ENCODE measurements at regions of chr12 and their contacts with region 1.

Region 1: GRCh38 chr12:10562306-10562933 is 51.0 kb downstream of the MAGOHB start:
- DNase-seq: no peak
- H3K4me3 ChIP-seq: no peak overlapping the region
- H3K27ac ChIP-seq: no peak overlapping the region
- H3K27me3 ChIP-seq: peaks cover 0 to 3% (median 0%) of the 10 kb centered on the region in 45 donors
- CTCF ChIP-seq: peak; percentile 69 to 98 (median 87)

Region 2: DNA sequence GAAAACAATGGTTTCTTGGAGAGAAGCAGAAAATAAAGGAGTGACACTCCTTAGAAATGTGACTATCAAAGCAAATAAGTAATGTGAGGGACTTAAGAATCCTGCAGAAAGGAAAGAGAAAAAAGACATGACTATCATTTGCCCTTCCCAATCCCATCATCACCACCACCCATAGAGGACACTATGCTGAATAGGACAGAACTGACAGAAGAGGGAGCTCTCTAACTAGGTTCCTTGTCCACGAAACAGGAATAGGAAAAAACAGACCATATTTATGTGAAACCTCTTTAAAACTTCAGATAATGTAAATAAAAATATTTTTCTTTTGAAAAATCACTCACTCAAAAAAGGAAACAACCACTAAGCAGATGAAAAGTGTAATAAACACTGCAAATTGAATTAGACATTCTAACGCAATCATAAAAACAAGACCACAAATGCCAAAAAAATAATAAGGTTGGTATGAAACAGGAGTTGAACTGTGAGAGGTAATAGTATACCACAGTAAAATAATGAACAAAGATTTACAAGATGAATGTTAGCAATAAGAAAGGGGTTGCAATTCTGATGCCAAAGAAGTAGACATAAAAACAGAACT is 230.7 kb before region 1 on chr12:
- intact Hi-C with region 1: loop called (anchors 2 kb)
- DNase-seq: no peak
- H3K4me3 ChIP-seq: no peak overlapping the region
- H3K27ac ChIP-seq: no peak overlapping the region
- H3K27me3 ChIP-seq: no peaks in the 10 kb centered on the region
- CTCF ChIP-seq: peak in 55 of 56 donors; percentile 24 to 93 (median 78)

Region 3: DNA sequence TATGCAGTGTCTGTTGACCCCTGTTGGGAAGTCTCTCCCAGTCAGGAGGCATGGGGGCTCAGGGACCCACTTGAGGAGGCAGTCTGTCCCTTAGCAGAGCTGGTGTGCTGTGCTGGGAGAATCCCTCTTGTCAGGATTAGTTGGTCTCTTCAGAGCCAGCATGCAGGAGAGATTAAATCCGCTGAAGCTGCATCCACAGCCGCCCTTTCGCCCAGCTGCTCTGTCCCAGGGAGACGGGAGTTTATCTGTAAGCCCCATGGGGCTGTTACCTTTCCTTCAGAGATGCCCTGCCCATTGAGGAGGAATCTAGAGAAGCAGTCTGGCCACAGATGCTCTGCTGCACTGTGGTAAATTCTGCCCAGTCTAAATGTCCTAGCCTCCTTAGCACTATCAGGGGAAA is 96.1 kb before region 1 on chr12:
- intact Hi-C with region 1: no loop called
- DNase-seq: no peak
- H3K4me3 ChIP-seq: no peak overlapping the region
- H3K27ac ChIP-seq: no peak overlapping the region
- H3K27me3 ChIP-seq: peaks cover 0 to 7% (median 0%) of the 10 kb centered on the region in 45 donors
- CTCF ChIP-seq: no peak

Measured in dorsolateral prefrontal cortex (tissue), 120 donors.